GM12878 (cell line): ENCODE measurements at regions of chr11 and their contacts with region 1.

Region 1: GRCh38 chr11:26572781-26573255 is 755 bp upstream of the MUC15 start:
- DNase-seq: no peak
- ATAC-seq: peak; percentile 17; the same call in 2 of the 3 replicates
- H3K4me3 ChIP-seq: no peak overlapping the region
- H3K27ac ChIP-seq: no peak overlapping the region
- H3K4me1 ChIP-seq: no peaks in the 10 kb centered on the region
- H3K27me3 ChIP-seq: no peaks in the 10 kb centered on the region; a peak in 1 of 4 replicates
- CTCF ChIP-seq: no peak
- EP300 ChIP-seq: no peak
- POLR2A ChIP-seq: no peak
- RAD21 ChIP-seq: no peak

Region 2: DNA sequence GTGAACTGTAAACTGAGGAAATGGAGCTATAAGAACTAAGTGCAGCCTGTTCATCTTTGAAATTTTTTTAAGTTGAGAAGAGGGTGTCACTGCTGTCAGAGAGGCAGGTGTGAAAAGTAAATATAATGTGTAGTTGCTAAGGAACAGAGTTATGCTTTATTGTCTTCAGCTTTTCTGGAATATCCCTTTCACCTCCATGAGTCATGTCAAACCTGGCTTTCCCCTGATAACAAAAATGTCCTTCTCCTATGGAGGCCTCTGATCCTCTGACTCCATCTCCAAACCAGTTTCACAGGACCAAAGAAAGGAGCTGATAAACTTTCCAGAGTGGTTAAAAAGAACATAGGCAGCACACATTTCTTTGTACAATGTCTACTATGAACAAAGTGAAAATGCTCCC is 12.0 kb after region 1 on chr11:
- CTCF ChIA-PET with region 1: interaction called, 5 read pairs
- POLR2A ChIA-PET with region 1: interaction called, 12 read pairs
- RAD21 ChIA-PET with region 1: interaction called, 7 read pairs
- SMC1A ChIA-PET with region 1: interaction called, 16 read pairs
- in situ Hi-C with region 1: no loop called
- intact Hi-C with region 1: no loop called
- DNase-seq: no peak
- ATAC-seq: peak; percentile 85
- H3K4me3 ChIP-seq: no peak overlapping the region
- H3K27ac ChIP-seq: no peak overlapping the region
- H3K4me1 ChIP-seq: no peaks in the 10 kb centered on the region
- H3K27me3 ChIP-seq: no peaks in the 10 kb centered on the region
- CTCF ChIP-seq: no peak
- EP300 ChIP-seq: no peak
- POLR2A ChIP-seq: no peak
- RAD21 ChIP-seq: no peak

Region 3: DNA sequence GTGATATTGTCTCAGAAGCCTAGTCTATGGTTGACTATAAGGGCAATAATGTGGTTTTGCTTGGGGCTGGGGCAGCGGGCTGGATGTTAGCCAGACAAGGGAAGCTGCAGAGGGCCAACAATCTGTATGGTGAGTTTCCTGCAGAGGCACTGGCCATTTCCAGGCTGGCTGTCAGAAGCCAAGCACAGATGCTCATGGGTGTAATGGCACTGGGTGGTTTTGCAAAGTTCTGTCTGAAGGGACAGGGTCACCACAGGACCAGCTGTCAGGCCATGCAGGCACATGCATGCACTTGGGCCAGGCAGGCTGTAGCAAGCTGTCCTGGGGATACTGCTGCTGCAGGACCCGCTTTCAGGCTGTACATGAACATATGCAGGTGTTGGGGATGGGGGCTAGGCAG is 40.9 kb after region 1 on chr11:
- CTCF ChIA-PET with region 1: interaction called, 3 read pairs
- POLR2A ChIA-PET with region 1: interaction called, 3 read pairs
- RAD21 ChIA-PET with region 1: interaction called, 4 read pairs
- SMC1A ChIA-PET with region 1: interaction called, 11 read pairs
- in situ Hi-C with region 1: no loop called
- intact Hi-C with region 1: no loop called
- DNase-seq: no peak
- ATAC-seq: peak; percentile 8; the same call in 2 of the 3 replicates
- H3K4me3 ChIP-seq: no peak overlapping the region
- H3K27ac ChIP-seq: no peak overlapping the region
- H3K4me1 ChIP-seq: no peaks in the 10 kb centered on the region; the same call in 1 of the 2 replicates
- H3K27me3 ChIP-seq: no peaks in the 10 kb centered on the region
- CTCF ChIP-seq: no peak
- EP300 ChIP-seq: no peak
- POLR2A ChIP-seq: no peak
- RAD21 ChIP-seq: no peak